Gastrocnemius medialis (tissue), 4 donors: ENCODE measurements at regions of chr2 and their contacts with region 1.

Region 1: DNA sequence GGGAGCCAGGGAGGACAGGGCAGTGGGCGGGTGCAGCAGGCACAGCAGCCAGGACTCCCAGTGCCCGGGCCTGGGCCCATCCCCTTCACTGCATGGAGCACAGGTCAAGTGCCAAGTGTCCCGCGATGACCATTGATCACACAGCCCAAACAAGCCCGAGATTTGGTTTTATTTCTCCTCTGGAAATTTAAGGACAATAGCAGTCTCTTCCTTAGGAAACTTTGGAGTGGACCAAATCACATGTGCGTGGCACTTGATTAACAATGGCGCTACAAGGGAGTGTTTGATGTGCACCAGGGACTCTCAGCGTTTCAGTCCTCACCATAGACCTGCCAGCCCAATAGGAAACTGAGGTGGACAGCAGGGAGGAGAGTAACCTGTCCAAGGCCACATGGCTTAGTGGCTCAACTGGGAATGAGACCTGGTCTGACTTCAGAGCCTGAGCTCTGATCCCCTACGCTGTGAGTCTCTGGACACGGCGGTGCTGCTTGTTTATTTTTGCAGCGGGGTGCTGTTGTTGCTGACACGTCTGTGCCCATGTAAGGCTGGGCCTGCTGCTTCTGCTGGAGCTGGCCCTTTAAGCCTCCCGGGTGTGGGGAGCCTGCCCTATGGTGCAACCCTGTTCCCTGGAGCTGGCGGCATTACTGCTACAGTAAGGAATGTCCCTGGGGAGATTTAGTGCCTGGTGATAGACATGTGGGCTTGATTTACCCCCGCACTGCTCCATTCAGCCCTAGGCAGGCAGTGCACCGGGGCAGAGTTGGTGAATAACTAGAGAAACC is 194.2 kb downstream of the INHBB start:
- DNase-seq: peak; percentile 96 to 98
- ATAC-seq: peak; percentile 73 to 78
- H3K4me3 ChIP-seq: peak overlapping the region in 1 of 4 donors; percentile 36
- H3K27ac ChIP-seq: peak overlapping the region; percentile 96 to 100 (median 98)
- H3K4me1 ChIP-seq: peaks cover 48 to 49% of the 10 kb centered on the region in 2 donors
- H3K27me3 ChIP-seq: no peaks in the 10 kb centered on the region
- CTCF ChIP-seq: no peak
- POLR2A ChIP-seq: peak; percentile 65 to 86

Region 2: GRCh38 chr2:118834901-118835745 is 1705.0 kb before region 1 on chr2:
- in situ Hi-C with region 1: no loop called
- intact Hi-C with region 1: loop called (anchors 5 kb)
- DNase-seq: peak in 1 of 2 donors; percentile 73
- ATAC-seq: peak; percentile 60 to 67
- H3K4me3 ChIP-seq: peak overlapping the region; percentile 73 to 93 (median 76)
- H3K27ac ChIP-seq: peak overlapping the region; percentile 77 to 96 (median 92)
- H3K4me1 ChIP-seq: peaks cover 14 to 33% of the 10 kb centered on the region in 2 donors
- H3K27me3 ChIP-seq: no peaks in the 10 kb centered on the region
- CTCF ChIP-seq: no peak
- POLR2A ChIP-seq: no peak

Region 3: DNA sequence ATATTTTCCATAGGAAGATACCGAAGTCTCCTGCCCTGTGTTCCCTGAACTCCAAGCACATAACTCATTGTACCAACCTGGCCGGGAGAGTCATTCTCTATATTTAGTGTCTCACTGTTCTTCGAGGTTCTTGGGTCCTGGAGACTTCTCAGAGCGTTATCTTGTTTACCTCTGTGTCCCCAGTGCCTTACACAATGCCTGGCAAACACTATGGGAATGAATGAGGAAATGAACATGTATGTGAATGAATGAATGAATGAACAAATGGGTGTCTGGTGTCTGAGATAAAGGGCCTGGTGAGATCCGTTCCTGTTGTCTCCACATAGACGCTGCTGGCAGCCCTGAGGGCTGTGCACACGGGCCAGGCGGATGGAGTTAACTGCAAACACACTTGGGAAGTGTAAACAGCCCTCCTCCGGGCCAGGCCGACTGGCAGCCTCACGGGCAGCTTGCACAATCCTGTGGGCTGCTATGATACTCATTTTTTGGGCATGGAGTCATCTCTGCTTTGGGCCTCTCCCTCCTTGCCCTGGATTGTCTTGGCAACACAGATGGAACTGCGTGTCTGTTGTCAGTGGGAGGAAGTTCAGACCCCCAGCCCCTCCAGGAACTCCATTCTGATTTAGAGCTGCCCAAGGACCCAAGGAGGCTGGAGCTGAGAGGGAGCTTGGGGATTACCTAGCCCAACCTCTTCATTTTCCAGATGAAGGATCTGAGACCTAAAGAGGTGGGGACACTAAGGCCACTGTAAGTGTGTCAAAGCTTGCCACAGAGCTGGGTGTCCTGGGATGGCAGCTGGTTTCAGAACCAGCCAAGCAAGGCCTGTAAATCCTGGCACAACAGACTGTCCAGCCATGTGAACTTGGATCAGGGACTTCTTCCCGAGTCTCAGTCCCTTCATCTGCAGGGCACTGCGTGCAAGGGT is 69.8 kb before region 1 on chr2:
- in situ Hi-C with region 1: no loop called
- intact Hi-C with region 1: loop called (anchors 1 kb)
- DNase-seq: peak; percentile 93 to 95
- ATAC-seq: peak; percentile 89 to 90
- H3K4me3 ChIP-seq: no peak overlapping the region
- H3K27ac ChIP-seq: peak overlapping the region; percentile 84 to 98 (median 93)
- H3K4me1 ChIP-seq: peaks cover 27 to 30% of the 10 kb centered on the region in 2 donors
- H3K27me3 ChIP-seq: no peaks in the 10 kb centered on the region
- CTCF ChIP-seq: no peak
- POLR2A ChIP-seq: peak in 1 of 2 donors; percentile 31